ENCODE measurements at regions of chr6 and their contacts with region 1.

Region 1: GRCh38 chr6:116766506-116767176 is 1.1 kb upstream of the FAM162B start:
- DNase-seq: no peak
- H3K27ac ChIP-seq: no peak overlapping the region
- CTCF ChIP-seq: no peak

Region 2: GRCh38 chr6:116253505-116254296 is 512.9 kb before region 1 on chr6 and contains the start of gene TSPYL4:
- CTCF ChIA-PET with region 1: interaction called, 11 read pairs
- POLR2A ChIA-PET with region 1: no interaction called
- DNase-seq: peak; percentile 92
- H3K27ac ChIP-seq: peak within 1 kb of the TSS; percentile 84
- CTCF ChIP-seq: no peak

Region 3: GRCh38 chr6:116745176-116745575 is 21.5 kb before region 1 on chr6:
- CTCF ChIA-PET with region 1: no interaction called
- POLR2A ChIA-PET with region 1: no interaction called
- DNase-seq: no peak
- H3K27ac ChIP-seq: no peak overlapping the region
- CTCF ChIP-seq: no peak

Region 4: DNA sequence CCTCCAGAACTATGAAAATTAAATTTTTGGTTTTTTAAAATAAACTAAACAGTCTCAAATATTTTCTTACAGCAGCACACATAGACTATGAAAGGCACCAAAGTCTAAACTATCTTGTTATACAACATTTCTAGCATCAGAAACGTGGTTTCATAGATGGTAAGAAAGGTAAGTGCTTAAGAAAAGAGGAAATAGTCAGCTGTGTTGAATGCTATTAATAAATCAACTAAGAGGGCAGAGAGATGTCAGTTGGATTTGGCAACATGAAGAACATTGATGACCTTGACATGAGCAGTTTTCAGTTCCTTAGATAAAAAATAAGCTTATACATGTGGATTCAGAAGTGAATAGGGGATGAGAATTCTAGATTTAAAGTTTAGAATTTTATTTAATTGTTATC is 224.0 kb after region 1 on chr6:
- CTCF ChIA-PET with region 1: no interaction called
- POLR2A ChIA-PET with region 1: no interaction called
- DNase-seq: no peak
- H3K27ac ChIP-seq: no peak overlapping the region
- CTCF ChIP-seq: no peak

Measured in RWPE1 (cell line).